Activated CD4-positive, alpha-beta T cell treated with anti-CD3 and anti-CD28 coated beads, Interleukin-2, amount 10 ng/mL, durations not matched to agents 7 days and 5 days (primary cell): ENCODE measurements at regions of chr17 and their contacts with region 1.

Region 1: GRCh38 chr17:47733047-47733673 is at the start of gene TBX21:
- DNase-seq: peak; percentile 90
- H3K4me3 Mint-ChIP-seq: peak within 1 kb of the TSS; percentile 91
- H3K27ac Mint-ChIP-seq: peak within 1 kb of the TSS; percentile 93
- H3K4me1 Mint-ChIP-seq: peaks cover 79% of the 10 kb centered on the region
- H3K27me3 Mint-ChIP-seq: peaks cover 1% of the 10 kb centered on the region
- total RNA-seq, gene TBX21: 13.8 to 16.0 TPM

Region 2: GRCh38 chr17:47745037-47745380 is 11.8 kb after region 1 on chr17:
- CTCF ChIA-PET with region 1: interaction called, 13 read pairs
- POLR2A ChIA-PET with region 1: no interaction called
- DNase-seq: no peak
- H3K4me3 Mint-ChIP-seq: no peak overlapping the region
- H3K27ac Mint-ChIP-seq: no peak overlapping the region
- H3K4me1 Mint-ChIP-seq: peaks cover 29% of the 10 kb centered on the region
- H3K27me3 Mint-ChIP-seq: no peaks in the 10 kb centered on the region

Region 3: DNA sequence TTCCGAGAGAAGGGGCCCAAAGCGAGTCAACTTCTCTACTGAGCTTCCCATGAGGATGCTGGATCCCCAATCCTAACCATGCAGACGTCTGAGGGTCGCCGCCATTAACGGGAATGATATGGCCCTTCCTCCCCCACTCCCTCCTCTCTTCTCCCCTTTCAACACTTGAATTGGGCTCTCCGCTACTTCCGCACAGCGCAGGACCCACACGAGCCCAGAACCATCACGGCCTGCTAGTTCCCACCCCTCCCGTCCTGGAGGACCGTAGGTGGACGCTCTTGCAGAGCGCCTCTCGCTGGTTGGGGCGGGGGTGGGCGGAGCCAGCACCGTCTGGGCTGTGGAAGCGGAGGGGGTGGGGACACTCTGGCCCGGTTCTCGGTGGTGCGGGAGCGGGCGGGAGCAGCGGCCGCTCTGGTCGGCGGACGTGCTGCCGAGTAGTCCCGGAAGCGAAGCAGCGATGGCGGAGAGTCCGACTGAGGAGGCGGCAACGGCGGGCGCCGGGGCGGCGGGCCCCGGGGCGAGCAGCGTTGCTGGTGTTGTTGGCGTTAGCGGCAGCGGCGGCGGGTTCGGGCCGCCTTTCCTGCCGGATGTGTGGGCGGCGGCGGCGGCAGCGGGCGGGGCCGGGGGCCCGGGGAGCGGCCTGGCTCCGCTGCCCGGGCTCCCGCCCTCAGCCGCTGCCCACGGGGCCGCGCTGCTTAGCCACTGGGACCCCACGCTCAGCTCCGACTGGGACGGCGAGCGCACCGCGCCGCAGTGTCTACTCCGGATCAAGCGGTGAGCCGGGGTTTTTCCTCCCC is 1175.1 kb after region 1 on chr17 and contains the start of gene UBE2Z:
- CTCF ChIA-PET with region 1: no interaction called
- POLR2A ChIA-PET with region 1: interaction called, 11 read pairs
- DNase-seq: peak; percentile 91
- H3K4me3 Mint-ChIP-seq: peak within 1 kb of the TSS; percentile 97
- H3K27ac Mint-ChIP-seq: peak within 1 kb of the TSS; percentile 94
- H3K4me1 Mint-ChIP-seq: peaks cover 51% of the 10 kb centered on the region
- H3K27me3 Mint-ChIP-seq: no peaks in the 10 kb centered on the region
- total RNA-seq, gene UBE2Z: 74.5 to 76.5 TPM